ENCODE measurements at regions of chr21 and their contacts with region 1.

Region 1: DNA sequence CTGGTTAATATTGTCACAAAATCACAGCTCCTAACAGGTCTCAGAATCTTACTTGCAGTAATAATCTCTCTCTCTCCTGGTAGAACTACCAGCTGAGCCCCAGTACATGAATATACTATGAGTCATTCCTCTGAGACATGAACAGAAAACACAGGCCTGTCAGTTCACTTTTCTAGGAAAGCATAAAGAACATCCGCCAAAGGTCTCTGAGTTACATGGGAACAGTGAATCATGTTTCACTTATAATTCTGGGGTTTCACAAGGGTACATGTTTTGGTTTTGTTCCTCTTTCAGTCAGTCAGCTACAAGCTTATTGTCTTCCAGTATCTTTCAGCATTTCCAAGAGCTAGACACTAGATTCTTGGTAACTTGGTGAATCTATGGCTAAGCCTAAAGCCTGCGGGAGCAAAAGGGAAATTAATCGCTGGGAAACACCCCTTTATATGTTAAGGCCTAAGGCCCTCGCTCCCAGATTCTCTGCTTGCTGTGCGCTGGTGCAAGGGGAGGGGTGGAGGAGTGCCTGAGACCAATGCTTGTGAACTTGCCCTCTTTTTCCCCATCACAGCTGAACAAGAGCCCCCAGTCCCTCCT is 31.7 kb downstream of the IFNGR2 start:
- DNase-seq: peak; percentile 53
- ATAC-seq: peak; percentile 96
- H3K4me3 Mint-ChIP-seq: peak overlapping the region; percentile 4
- H3K27ac Mint-ChIP-seq: peak overlapping the region; percentile 59
- H3K4me1 Mint-ChIP-seq: peaks cover 26% of the 10 kb centered on the region
- H3K27me3 Mint-ChIP-seq: no peaks in the 10 kb centered on the region

Region 2: DNA sequence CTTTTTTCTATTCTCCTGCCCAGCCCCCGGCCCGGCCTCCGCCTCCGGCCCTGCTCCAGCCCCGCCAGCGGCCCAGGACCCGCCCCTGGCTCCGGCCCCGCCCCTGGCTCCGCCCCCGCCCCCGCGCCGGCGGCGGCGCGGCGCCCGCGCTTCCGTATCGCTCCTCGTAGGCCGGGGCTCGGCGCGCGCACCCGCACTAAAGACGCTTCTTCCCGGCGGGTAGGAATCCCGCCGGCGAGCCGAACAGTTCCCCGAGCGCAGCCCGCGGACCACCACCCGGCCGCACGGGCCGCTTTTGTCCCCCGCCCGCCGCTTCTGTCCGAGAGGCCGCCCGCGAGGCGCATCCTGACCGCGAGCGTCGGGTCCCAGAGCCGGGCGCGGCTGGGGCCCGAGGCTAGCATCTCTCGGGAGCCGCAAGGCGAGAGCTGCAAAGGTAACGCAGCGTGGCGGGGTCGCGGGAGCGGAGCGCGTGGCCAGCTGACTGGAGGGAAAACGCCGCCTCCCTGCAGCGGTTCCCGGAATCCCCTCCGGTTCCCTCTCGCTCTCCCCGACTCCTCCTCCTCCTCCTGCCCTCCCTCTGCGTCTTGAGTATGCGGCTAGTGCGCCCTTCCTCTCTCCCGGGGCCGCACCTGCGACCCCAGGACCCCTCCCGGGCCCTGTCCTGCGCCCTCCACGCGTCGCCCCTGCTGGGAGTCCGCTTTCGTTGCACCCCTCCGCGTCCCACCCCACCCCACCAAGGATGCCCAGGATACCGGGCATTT is 204.9 kb before region 1 on chr21 and contains the start of gene IFNAR2:
- CTCF ChIA-PET with region 1: no interaction called
- POLR2A ChIA-PET with region 1: no interaction called
- intact Hi-C with region 1: loop called in 1 of 2 experiments (anchors 1 kb)
- DNase-seq: peak; percentile 85
- ATAC-seq: peak; percentile 55
- H3K4me3 Mint-ChIP-seq: peak within 1 kb of the TSS; percentile 84
- H3K27ac Mint-ChIP-seq: peak within 1 kb of the TSS; percentile 91
- H3K4me1 Mint-ChIP-seq: peaks cover 54% of the 10 kb centered on the region
- H3K27me3 Mint-ChIP-seq: no peaks in the 10 kb centered on the region
- total RNA-seq, gene IFNAR2: 26.6 to 29.8 TPM

Region 3: DNA sequence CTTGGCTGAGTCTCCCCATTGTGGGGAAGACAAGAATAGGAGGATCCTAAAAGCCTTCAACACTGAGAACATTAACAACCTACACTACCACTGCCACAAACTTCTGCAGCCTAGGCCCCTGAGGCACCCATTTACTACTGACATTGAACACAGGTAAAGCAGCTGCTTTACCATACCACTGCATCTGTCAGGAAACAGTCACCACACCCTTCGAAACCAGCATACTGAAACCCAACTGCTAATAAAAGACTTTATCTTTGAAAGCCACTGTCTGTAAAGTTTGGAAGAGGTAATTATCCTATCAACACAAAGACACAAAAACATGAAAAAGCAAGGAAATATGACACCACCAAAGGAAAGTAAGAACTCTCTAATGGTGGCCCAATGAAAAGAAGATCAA is 102.7 kb before region 1 on chr21:
- CTCF ChIA-PET with region 1: interaction called, 4 read pairs
- POLR2A ChIA-PET with region 1: interaction called, 10 read pairs
- intact Hi-C with region 1: no loop called
- DNase-seq: no peak
- ATAC-seq: peak; percentile 51
- H3K4me3 Mint-ChIP-seq: no peak overlapping the region
- H3K27ac Mint-ChIP-seq: peak overlapping the region; percentile 1
- H3K4me1 Mint-ChIP-seq: peaks cover 65% of the 10 kb centered on the region
- H3K27me3 Mint-ChIP-seq: no peaks in the 10 kb centered on the region

Region 4: DNA sequence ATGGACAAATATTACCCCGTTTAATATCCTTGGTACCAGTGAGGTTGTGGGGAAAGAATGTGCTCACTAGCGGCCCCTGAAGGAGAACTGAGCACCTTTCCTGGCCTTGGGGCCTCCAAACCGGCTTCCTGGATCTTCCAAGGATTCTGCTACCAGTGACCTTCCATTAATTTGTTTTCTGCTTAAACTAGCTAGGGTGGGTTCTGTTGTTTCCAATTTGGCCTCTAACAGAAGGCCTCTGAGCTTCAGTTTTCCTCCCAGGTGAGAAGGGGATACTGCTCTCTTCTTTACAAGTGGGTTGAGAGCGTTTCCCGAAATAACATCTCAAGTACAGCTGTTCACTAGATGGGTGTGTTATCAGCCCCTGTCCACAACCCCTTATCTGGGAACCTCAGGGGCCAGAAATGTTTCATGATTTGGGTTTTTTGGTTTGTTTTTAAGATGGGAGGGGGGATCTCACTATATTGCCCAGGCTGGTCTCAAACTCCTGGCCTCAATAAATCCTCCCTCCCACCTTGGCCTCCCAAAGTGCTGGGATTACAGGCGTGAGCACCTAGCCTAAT is 48.6 kb before region 1 on chr21:
- CTCF ChIA-PET with region 1: interaction called, 11 read pairs
- POLR2A ChIA-PET with region 1: interaction called, 9 read pairs
- intact Hi-C with region 1: loop called (anchors 1 kb)
- DNase-seq: no peak
- ATAC-seq: no peak
- H3K4me3 Mint-ChIP-seq: no peak overlapping the region
- H3K27ac Mint-ChIP-seq: no peak overlapping the region
- H3K4me1 Mint-ChIP-seq: peaks cover 42% of the 10 kb centered on the region
- H3K27me3 Mint-ChIP-seq: peaks cover 7% of the 10 kb centered on the region

Region 5: GRCh38 chr21:33479679-33480480 is 45.0 kb after region 1 on chr21 and contains the start of gene TMEM50B:
- CTCF ChIA-PET with region 1: no interaction called
- POLR2A ChIA-PET with region 1: no interaction called
- intact Hi-C with region 1: loop called in 1 of 2 experiments (anchors 2 kb)
- DNase-seq: peak; percentile 99
- ATAC-seq: peak; percentile 97
- H3K4me3 Mint-ChIP-seq: peak within 1 kb of the TSS; percentile 83
- H3K27ac Mint-ChIP-seq: peak within 1 kb of the TSS; percentile 88
- H3K4me1 Mint-ChIP-seq: peaks cover 17% of the 10 kb centered on the region
- H3K27me3 Mint-ChIP-seq: no peaks in the 10 kb centered on the region
- total RNA-seq, gene TMEM50B: 13.6 to 15.2 TPM

Region 6: GRCh38 chr21:33668180-33668579 is 233.3 kb after region 1 on chr21:
- CTCF ChIA-PET with region 1: no interaction called
- POLR2A ChIA-PET with region 1: no interaction called
- intact Hi-C with region 1: no loop called
- DNase-seq: no peak
- ATAC-seq: no peak
- H3K4me3 Mint-ChIP-seq: no peak overlapping the region
- H3K27ac Mint-ChIP-seq: no peak overlapping the region
- H3K4me1 Mint-ChIP-seq: no peaks in the 10 kb centered on the region
- H3K27me3 Mint-ChIP-seq: no peaks in the 10 kb centered on the region

Measured in activated CD4-positive, alpha-beta T cell treated with anti-CD3 and anti-CD28 coated beads for 36 hours (primary cell).